ENCODE measurements at regions of chr11 and their contacts with region 1.

Region 1: DNA sequence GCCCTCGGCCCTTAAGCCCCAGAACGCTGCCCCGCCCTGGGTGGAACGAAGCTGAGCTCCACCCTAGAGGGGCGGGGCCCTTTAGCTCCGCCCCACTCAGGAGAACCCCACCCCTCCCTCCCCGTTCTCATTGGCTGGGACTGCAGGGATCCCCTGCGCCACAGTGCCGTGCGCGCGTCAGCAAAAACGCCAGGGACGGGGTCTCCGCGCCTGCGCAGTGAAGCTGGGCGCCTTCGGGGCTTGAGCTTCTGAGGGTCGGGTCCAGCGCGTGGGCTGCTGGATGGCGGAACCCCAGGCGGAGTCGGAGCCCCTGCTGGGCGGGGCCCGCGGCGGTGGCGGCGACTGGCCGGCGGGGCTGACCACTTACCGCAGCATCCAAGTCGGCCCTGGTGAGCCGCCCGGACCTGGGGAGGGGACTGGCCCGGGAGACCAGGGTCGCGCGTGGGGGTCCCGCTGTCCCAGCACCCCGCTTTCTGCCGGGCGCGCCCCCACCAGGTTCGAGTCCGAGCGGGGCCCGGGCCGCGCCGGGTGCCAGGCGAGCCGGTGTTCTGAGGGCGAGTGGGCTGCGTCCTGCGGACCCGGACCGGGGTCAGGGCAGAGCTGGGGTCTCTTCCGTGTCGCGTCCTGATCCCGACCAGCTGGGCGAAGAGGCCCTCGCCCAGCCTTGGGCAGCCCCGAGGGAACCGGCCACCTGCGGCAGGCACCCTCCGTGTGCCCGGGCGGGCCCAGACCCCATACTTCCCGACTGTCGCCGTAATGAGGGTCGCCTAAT is at the start of gene TPCN2:
- DNase-seq: peak; percentile 94
- H3K4me3 Mint-ChIP-seq: peak within 1 kb of the TSS; percentile 76
- H3K27ac Mint-ChIP-seq: peak within 1 kb of the TSS; percentile 71
- H3K4me1 Mint-ChIP-seq: peaks cover 17% of the 10 kb centered on the region
- H3K27me3 Mint-ChIP-seq: peaks cover 2% of the 10 kb centered on the region
- total RNA-seq, gene TPCN2: 12.0 to 12.8 TPM

Region 2: GRCh38 chr11:68903288-68904247 is 145.3 kb before region 1 on chr11 and contains the starts of genes IGHMBP2 and MRPL21:
- CTCF ChIA-PET with region 1: no interaction called
- POLR2A ChIA-PET with region 1: no interaction called
- intact Hi-C with region 1: loop called (anchors 2 kb)
- DNase-seq: peak; percentile 91
- H3K4me3 Mint-ChIP-seq: peak within 1 kb of the TSS; percentile 91
- H3K27ac Mint-ChIP-seq: peak within 1 kb of the TSS; percentile 74
- H3K4me1 Mint-ChIP-seq: peaks cover 37% of the 10 kb centered on the region
- H3K27me3 Mint-ChIP-seq: no peaks in the 10 kb centered on the region
- total RNA-seq, gene IGHMBP2: 24.4 to 24.8 TPM
- total RNA-seq, gene MRPL21: 80.7 to 86.0 TPM

Region 3: DNA sequence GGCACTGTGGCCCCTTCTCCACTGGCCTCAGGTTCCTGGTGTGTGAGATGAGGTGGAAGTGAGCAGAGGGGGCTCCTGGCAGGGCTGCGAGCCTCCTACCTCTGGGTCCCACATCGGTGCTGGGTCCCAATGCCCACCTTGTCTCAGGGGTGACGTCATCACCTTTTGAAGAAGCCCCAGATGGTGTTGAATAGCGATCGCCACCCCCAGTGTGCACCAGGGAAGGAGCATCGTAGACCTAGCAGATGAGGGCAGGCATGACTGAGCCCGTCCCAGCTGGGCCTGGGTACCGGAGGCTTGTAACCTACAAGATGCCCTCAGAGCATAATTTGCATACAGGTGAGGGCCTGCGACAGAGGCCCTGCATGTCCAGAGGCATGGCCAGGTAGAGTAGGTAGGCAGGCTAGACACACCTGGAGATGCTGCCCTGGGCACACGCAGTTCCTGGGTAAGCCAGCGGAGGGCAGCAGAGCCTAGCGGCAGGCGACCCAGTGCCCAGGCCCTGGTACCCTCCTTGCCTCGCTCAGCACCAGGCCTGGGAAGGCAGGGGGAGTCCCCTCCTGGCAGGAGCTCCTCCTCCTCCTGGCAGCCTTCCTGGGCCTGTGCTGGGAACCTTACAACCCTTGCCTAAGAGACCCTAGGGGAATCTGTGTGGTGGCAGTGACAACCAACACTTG is 52.3 kb after region 1 on chr11:
- CTCF ChIA-PET with region 1: no interaction called
- POLR2A ChIA-PET with region 1: no interaction called
- intact Hi-C with region 1: no loop called
- DNase-seq: peak; percentile 79
- H3K4me3 Mint-ChIP-seq: no peak overlapping the region
- H3K27ac Mint-ChIP-seq: no peak overlapping the region
- H3K4me1 Mint-ChIP-seq: peaks cover 2% of the 10 kb centered on the region
- H3K27me3 Mint-ChIP-seq: peaks cover 4% of the 10 kb centered on the region